ENCODE measurements at regions of chr15 and their contacts with region 1.

Region 1: DNA sequence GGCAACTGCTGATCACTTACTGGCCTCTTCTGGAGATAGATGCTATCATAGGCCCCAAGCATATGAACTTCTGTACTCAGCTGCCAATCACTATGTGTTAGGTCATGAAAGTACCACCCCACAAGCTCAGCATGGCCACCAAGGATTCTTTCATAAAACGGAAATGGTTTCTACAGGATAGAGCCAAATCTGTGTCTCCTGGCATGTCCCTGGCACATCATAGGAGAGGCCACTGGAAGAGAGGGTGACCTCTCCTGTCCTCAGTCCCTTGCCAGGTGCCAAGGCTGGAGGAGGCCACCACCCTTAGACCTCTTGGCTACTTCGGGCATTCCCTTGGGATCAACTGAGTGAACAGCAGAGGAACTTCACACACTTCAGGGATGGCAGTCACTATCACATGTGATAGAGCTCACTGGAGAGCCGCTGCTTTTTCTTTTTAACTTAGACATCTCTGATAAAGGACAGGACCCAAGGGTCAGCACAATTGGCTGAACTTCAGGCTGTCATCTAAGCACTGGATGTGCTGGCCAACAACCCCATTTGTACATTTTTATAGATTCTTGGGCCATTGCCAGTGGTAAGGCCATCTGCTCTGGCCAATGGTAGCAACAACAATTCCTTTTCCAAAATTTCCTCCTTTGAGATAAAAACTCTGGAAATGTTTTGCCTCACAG is 425.2 kb downstream of the SQOR start:
- DNase-seq: no peak
- H3K4me3 ChIP-seq: no peak overlapping the region
- H3K27ac ChIP-seq: no peak overlapping the region
- H3K4me1 ChIP-seq: no peaks in the 10 kb centered on the region
- H3K27me3 ChIP-seq: no peaks in the 10 kb centered on the region
- CTCF ChIP-seq: no peak

Region 2: GRCh38 chr15:46117071-46117470 is 57.0 kb after region 1 on chr15:
- intact Hi-C with region 1: loop called (anchors 5 kb)
- DNase-seq: no peak
- H3K4me3 ChIP-seq: no peak overlapping the region
- H3K27ac ChIP-seq: no peak overlapping the region
- H3K4me1 ChIP-seq: no peaks in the 10 kb centered on the region
- H3K27me3 ChIP-seq: no peaks in the 10 kb centered on the region
- CTCF ChIP-seq: no peak

Measured in tibial artery (tissue), 4 donors.